A673 (cell line): ENCODE measurements at regions of chr1 and their contacts with region 1.

Region 1: DNA sequence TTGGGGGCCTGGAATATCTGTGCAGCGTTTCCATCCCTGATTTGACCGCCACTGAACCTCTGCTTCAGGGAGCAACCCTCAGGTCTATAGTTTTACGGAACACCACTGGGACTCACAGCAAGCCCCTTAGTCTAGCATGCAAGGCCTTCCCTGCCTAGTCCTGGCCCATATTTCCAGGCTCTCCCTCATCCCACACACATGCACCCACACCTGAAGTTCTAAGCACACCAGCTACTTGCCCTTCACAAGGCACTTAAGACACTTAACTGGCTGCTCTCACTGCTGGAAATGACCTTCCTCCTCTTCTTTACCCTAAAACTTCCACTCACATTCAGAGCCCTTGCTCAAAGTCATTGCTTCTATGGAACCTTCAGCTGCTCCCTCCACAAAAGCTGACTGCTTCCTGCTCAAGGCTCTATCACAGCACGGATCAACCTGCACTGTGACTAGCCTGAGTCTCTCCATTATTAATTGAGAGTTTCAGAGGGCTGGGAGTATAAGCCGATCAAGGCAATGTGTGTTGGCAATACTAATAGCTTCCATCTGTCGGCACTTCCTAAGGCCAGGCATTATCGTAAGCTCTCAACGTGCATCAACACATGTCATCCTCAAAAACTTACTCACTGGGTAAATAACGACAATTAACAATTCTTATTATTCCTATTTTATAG is 84.3 kb downstream of the RRAGC start:
- DNase-seq: peak; percentile 22
- H3K4me3 ChIP-seq: no peak overlapping the region
- H3K27ac ChIP-seq: no peak overlapping the region
- H3K4me1 ChIP-seq: no peaks in the 10 kb centered on the region
- H3K27me3 ChIP-seq: no peaks in the 10 kb centered on the region
- CTCF ChIP-seq: no peak

Region 2: GRCh38 chr1:37807555-37808368 is 967.5 kb before region 1 on chr1 and contains the starts of genes C1orf122 and YRDC:
- CTCF ChIA-PET with region 1: no interaction called
- POLR2A ChIA-PET with region 1: interaction called, 11 read pairs
- intact Hi-C with region 1: no loop called
- DNase-seq: peak; percentile 98
- H3K4me3 ChIP-seq: peak within 1 kb of the TSS; percentile 80
- H3K27ac ChIP-seq: peak within 1 kb of the TSS; percentile 86
- H3K4me1 ChIP-seq: peaks cover 15% of the 10 kb centered on the region
- H3K27me3 ChIP-seq: no peaks in the 10 kb centered on the region
- CTCF ChIP-seq: no peak
- total RNA-seq, gene C1orf122: 31.0 and 33.5 TPM in 2 replicates
- total RNA-seq, gene YRDC: 30.4 and 38.5 TPM in 2 replicates

Region 3: DNA sequence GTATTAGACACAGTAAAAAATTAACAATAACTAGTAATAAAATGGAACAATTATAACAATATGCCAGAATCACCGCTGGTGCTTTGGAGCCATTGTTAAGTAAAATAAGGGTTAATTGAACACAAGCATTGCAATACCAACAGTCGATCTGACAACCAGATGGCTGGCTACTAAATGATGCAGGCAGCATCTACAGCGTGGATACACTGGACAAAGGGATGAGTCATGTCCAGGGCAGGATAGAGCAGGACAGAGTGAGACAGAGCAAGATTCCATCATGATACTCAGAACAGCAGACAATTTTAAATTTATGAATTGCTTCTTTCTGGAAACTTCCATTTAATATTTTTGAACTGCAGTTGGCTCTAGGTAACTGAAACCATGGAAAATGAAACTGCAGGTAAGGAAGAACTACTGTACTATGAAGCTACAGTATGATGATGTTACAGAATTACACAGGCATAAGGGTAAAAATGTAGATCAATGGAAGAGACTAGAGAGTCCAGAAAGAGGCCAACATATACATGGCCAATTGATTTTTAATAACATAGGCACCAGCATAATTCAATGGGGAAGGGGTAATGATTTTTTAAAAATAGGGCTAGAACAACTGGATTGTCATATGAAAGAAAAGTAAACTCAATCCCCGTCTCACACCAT is 84.4 kb before region 1 on chr1:
- CTCF ChIA-PET with region 1: no interaction called
- POLR2A ChIA-PET with region 1: no interaction called
- intact Hi-C with region 1: no loop called
- DNase-seq: no peak
- H3K4me3 ChIP-seq: no peak overlapping the region
- H3K27ac ChIP-seq: no peak overlapping the region
- H3K4me1 ChIP-seq: no peaks in the 10 kb centered on the region
- H3K27me3 ChIP-seq: no peaks in the 10 kb centered on the region
- CTCF ChIP-seq: no peak

Region 4: GRCh38 chr1:38834937-38835827 is 59.9 kb after region 1 on chr1:
- CTCF ChIA-PET with region 1: interaction called, 10 read pairs
- POLR2A ChIA-PET with region 1: no interaction called
- intact Hi-C with region 1: no loop called
- DNase-seq: peak; percentile 89
- H3K4me3 ChIP-seq: no peak overlapping the region
- H3K27ac ChIP-seq: no peak overlapping the region
- H3K4me1 ChIP-seq: peaks cover 6% of the 10 kb centered on the region
- H3K27me3 ChIP-seq: no peaks in the 10 kb centered on the region
- CTCF ChIP-seq: peak; percentile 86

Region 5: GRCh38 chr1:38848071-38848470 is 72.8 kb after region 1 on chr1:
- CTCF ChIA-PET with region 1: no interaction called
- POLR2A ChIA-PET with region 1: no interaction called
- intact Hi-C with region 1: no loop called
- DNase-seq: no peak
- H3K4me3 ChIP-seq: no peak overlapping the region
- H3K27ac ChIP-seq: no peak overlapping the region
- H3K4me1 ChIP-seq: no peaks in the 10 kb centered on the region
- H3K27me3 ChIP-seq: no peaks in the 10 kb centered on the region
- CTCF ChIP-seq: no peak

Region 6: GRCh38 chr1:38964140-38964548 is 188.8 kb after region 1 on chr1:
- CTCF ChIA-PET with region 1: no interaction called
- POLR2A ChIA-PET with region 1: no interaction called
- intact Hi-C with region 1: no loop called
- DNase-seq: no peak
- H3K4me3 ChIP-seq: no peak overlapping the region
- H3K27ac ChIP-seq: no peak overlapping the region
- H3K4me1 ChIP-seq: no peaks in the 10 kb centered on the region
- H3K27me3 ChIP-seq: no peaks in the 10 kb centered on the region
- CTCF ChIP-seq: peak; percentile 24; the same call in 1 of the 2 replicates